Lower lobe of right lung (tissue), 2 donors: ENCODE measurements at regions of chr4 and their contacts with region 1.

Region 1: DNA sequence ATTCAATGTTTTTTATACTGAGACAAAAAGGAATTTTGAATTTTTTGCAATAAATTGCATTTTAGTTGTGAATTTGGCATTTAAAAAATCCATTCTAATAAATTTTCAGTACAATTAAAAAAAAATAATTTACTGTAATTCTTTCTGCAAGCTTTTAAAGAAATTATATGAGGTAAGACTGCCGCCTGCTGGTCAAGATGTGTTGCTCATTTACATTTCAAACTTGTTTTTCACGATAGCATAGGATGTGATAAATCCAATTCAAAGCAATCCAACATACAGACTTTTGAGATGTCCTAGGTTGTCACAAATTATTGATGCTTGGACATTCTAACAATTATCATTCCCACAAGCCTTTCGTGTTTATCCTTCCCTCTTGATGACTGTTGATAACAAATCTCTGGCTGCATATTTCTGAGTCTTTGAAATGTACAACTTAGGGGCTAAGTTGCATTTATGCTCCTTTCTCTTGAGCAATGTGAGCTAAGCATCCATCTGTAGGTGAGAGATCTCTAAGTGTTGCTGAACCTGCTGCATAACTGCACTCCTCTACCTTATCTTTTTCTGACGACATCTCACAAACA is 21.7 kb upstream of the MFAP3L start:
- DNase-seq: peak; percentile 52
- ATAC-seq: peak; percentile 47 to 51
- H3K4me3 ChIP-seq: no peak overlapping the region
- H3K27ac ChIP-seq: no peak overlapping the region
- H3K4me1 ChIP-seq: no peaks in the 10 kb centered on the region
- H3K27me3 ChIP-seq: no peaks in the 10 kb centered on the region
- CTCF ChIP-seq: peak; percentile 74

Region 2: GRCh38 chr4:169810325-169811323 is 237.2 kb before region 1 on chr4:
- intact Hi-C with region 1: loop called (anchors 5 kb)
- DNase-seq: no peak
- ATAC-seq: peak; percentile 29 to 73
- H3K4me3 ChIP-seq: no peak overlapping the region
- H3K27ac ChIP-seq: no peak overlapping the region
- H3K4me1 ChIP-seq: no peaks in the 10 kb centered on the region
- H3K27me3 ChIP-seq: no peaks in the 10 kb centered on the region
- CTCF ChIP-seq: peak; percentile 89